Activated CD4-positive, alpha-beta T cell treated with anti-CD3 and anti-CD28 coated beads, Interleukin-2, amount 10 ng/mL, durations not matched to agents 7 days and 5 days (primary cell): ENCODE measurements at regions of chr11 and their contacts with region 1.

Region 1: DNA sequence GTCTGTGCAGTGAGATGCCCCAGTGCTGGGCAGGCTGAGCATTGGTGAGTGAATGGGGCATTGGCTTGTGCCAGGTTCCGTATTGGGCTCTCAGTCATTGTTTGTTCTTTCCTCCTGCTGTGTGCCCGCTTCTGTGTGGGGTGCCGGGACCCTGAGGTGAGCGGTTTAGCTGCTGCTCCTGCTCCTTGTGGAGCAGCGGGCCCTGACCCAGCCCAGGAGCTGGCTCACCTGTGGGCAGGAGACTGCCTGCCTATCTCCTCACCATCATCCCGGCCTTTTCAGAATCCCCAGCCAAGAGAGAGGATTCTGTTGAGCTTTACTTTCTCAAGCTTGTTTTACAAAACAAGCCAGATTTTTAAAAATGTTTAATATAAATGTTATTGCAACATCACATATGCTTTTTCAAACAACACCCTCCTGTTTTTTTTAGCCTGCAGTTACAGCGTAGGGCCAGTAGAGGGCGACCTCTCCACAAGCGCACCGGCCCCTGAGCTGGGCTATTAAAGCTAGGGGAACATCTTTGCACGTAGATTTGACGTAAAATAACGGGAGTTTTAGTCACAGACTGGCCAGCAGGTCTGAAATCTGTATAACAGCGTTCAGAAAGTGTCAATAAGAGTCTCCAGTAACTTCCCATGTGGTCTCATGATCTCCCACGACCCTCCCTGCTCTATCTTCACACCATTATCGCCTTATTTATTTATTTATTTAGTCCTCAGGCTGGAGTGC is 25.1 kb upstream of the RELT start:
- DNase-seq: peak; percentile 62
- H3K4me3 Mint-ChIP-seq: no peak overlapping the region
- H3K27ac Mint-ChIP-seq: peak overlapping the region; percentile 21
- H3K4me1 Mint-ChIP-seq: peaks cover 20% of the 10 kb centered on the region
- H3K27me3 Mint-ChIP-seq: no peaks in the 10 kb centered on the region

Region 2: GRCh38 chr11:73317373-73317772 is 33.7 kb before region 1 on chr11:
- CTCF ChIA-PET with region 1: no interaction called
- POLR2A ChIA-PET with region 1: no interaction called
- DNase-seq: no peak
- H3K4me3 Mint-ChIP-seq: no peak overlapping the region
- H3K27ac Mint-ChIP-seq: no peak overlapping the region
- H3K4me1 Mint-ChIP-seq: peaks cover 19% of the 10 kb centered on the region
- H3K27me3 Mint-ChIP-seq: peaks cover 8% of the 10 kb centered on the region

Region 3: GRCh38 chr11:73335204-73335923 is 15.7 kb before region 1 on chr11:
- CTCF ChIA-PET with region 1: interaction called, 34 read pairs
- POLR2A ChIA-PET with region 1: no interaction called
- DNase-seq: peak; percentile 78
- H3K4me3 Mint-ChIP-seq: no peak overlapping the region
- H3K27ac Mint-ChIP-seq: no peak overlapping the region
- H3K4me1 Mint-ChIP-seq: no peaks in the 10 kb centered on the region
- H3K27me3 Mint-ChIP-seq: no peaks in the 10 kb centered on the region

Region 4: GRCh38 chr11:73388265-73389133 is 37.4 kb after region 1 on chr11:
- CTCF ChIA-PET with region 1: interaction called, 17 read pairs
- POLR2A ChIA-PET with region 1: interaction called, 3 read pairs
- DNase-seq: no peak
- H3K4me3 Mint-ChIP-seq: no peak overlapping the region
- H3K27ac Mint-ChIP-seq: peak overlapping the region; percentile 84
- H3K4me1 Mint-ChIP-seq: peaks cover 53% of the 10 kb centered on the region
- H3K27me3 Mint-ChIP-seq: no peaks in the 10 kb centered on the region

Region 5: GRCh38 chr11:73393479-73394380 is 42.7 kb after region 1 on chr11:
- CTCF ChIA-PET with region 1: interaction called, 17 read pairs
- POLR2A ChIA-PET with region 1: interaction called, 3 read pairs
- DNase-seq: peak; percentile 76
- H3K4me3 Mint-ChIP-seq: no peak overlapping the region
- H3K27ac Mint-ChIP-seq: peak overlapping the region; percentile 72
- H3K4me1 Mint-ChIP-seq: peaks cover 5% of the 10 kb centered on the region
- H3K27me3 Mint-ChIP-seq: no peaks in the 10 kb centered on the region

Region 6: DNA sequence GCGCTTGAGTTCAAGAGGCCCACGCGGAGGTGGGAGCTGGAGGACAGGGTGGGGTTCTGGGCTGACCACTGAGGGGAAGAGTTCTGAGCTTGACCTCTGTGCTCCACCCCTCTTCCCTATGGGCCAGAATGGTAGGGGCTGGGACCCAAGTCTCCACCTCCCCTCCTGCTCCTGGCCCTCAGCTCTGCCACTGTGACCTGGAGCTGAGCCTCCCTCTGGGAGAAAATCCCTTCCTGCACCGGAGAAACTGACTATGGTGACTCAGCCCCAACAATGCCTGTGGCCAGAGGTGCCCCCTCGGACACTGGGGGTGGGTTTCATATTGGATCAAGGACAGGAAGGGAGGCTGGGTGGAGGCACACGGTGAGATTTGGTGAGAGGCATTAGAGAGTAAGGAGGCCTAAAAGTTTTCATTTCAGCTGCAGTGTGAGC is 48.1 kb after region 1 on chr11:
- CTCF ChIA-PET with region 1: interaction called, 17 read pairs
- POLR2A ChIA-PET with region 1: no interaction called
- DNase-seq: no peak
- H3K4me3 Mint-ChIP-seq: no peak overlapping the region
- H3K27ac Mint-ChIP-seq: no peak overlapping the region
- H3K4me1 Mint-ChIP-seq: peaks cover 1% of the 10 kb centered on the region
- H3K27me3 Mint-ChIP-seq: no peaks in the 10 kb centered on the region

Region 7: GRCh38 chr11:73431396-73431795 is 80.3 kb after region 1 on chr11:
- CTCF ChIA-PET with region 1: no interaction called
- POLR2A ChIA-PET with region 1: no interaction called
- DNase-seq: no peak
- H3K4me3 Mint-ChIP-seq: no peak overlapping the region
- H3K27ac Mint-ChIP-seq: no peak overlapping the region
- H3K4me1 Mint-ChIP-seq: no peaks in the 10 kb centered on the region
- H3K27me3 Mint-ChIP-seq: no peaks in the 10 kb centered on the region

Region 8: GRCh38 chr11:73661035-73661628 is 310.1 kb after region 1 on chr11:
- CTCF ChIA-PET with region 1: interaction called, 27 read pairs
- POLR2A ChIA-PET with region 1: no interaction called
- DNase-seq: peak; percentile 84
- H3K4me3 Mint-ChIP-seq: peak overlapping the region; percentile 53
- H3K27ac Mint-ChIP-seq: no peak overlapping the region
- H3K4me1 Mint-ChIP-seq: peaks cover 12% of the 10 kb centered on the region
- H3K27me3 Mint-ChIP-seq: no peaks in the 10 kb centered on the region